ENCODE measurements at regions of chr12 and their contacts with region 1.

Region 1: DNA sequence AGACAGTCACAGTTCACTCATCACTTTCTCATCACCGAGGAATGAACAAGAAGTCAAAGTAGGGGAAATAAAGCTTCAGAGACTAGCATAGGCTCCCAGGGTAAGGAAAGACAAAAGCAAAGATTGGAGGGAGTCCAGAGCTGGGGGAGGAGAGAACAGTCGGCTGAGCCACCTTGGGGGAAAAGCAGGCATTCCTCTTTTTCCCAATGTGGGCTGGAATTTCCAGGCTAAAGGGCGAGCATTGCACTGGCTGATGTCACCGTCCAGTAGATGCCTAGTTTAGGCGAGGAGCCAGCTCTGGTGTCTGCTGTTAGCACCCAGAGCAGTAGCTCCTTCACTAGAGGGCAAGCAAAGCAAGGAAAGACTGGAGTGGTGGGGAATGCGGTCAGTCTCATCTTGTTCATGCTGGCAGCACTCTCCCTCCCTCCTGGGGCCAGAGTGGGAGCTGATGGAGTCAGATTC is 8.5 kb upstream of the KRT75 start:
- DNase-seq: peak; percentile 98
- H3K4me3 ChIP-seq: no peak overlapping the region
- H3K27ac ChIP-seq: peak overlapping the region; percentile 98
- H3K4me1 ChIP-seq: peaks cover 67% of the 10 kb centered on the region
- H3K27me3 ChIP-seq: no peaks in the 10 kb centered on the region
- CTCF ChIP-seq: peak; percentile 37 to 60

Region 2: GRCh38 chr12:52380271-52380694 is 62.3 kb before region 1 on chr12:
- CTCF ChIA-PET with region 1: interaction called, 3 read pairs
- dilution Hi-C with region 1: no loop called
- in situ Hi-C with region 1: loop called in 1 of 2 experiments (anchors 5 kb)
- intact Hi-C with region 1: no loop called
- DNase-seq: peak; percentile 58
- H3K4me3 ChIP-seq: no peak overlapping the region
- H3K27ac ChIP-seq: no peak overlapping the region
- H3K4me1 ChIP-seq: no peaks in the 10 kb centered on the region
- H3K27me3 ChIP-seq: no peaks in the 10 kb centered on the region
- CTCF ChIP-seq: peak; percentile 73 to 88

Region 3: DNA sequence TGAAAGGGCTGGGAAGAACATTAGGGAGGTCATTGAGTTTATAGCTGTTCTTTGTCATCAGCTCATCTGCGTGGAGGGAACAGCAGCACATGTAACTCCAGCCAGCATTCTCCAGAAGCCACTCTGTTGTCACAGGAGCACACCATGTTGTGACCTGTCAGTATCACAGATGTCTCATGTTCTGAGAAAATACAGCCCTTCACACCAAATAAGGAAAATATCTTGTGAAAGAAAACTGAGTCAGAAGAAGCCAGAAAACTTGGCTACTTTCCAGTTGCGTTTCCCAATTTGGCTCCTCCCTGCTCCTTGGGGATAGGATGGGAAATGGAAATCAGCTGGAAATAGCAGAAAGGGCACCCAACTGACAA is 26.3 kb before region 1 on chr12:
- CTCF ChIA-PET with region 1: no interaction called
- dilution Hi-C with region 1: no loop called
- in situ Hi-C with region 1: no loop called
- intact Hi-C with region 1: loop called (anchors 1 kb)
- DNase-seq: peak; percentile 96
- H3K4me3 ChIP-seq: no peak overlapping the region
- H3K27ac ChIP-seq: no peak overlapping the region
- H3K4me1 ChIP-seq: peaks cover 26% of the 10 kb centered on the region
- H3K27me3 ChIP-seq: no peaks in the 10 kb centered on the region
- CTCF ChIP-seq: no peak

Region 4: GRCh38 chr12:52495389-52495788 is 52.8 kb after region 1 on chr12:
- CTCF ChIA-PET with region 1: interaction called, 15 read pairs
- dilution Hi-C with region 1: loop called (anchors 5 kb)
- in situ Hi-C with region 1: no loop called
- intact Hi-C with region 1: loop called (anchors 1 kb)
- DNase-seq: peak; percentile 72
- H3K4me3 ChIP-seq: no peak overlapping the region
- H3K27ac ChIP-seq: peak overlapping the region; percentile 99
- H3K4me1 ChIP-seq: peaks cover 69% of the 10 kb centered on the region
- H3K27me3 ChIP-seq: no peaks in the 10 kb centered on the region
- CTCF ChIP-seq: peak in 1 of 2 donors; percentile 31

Region 5: GRCh38 chr12:52515927-52516831 is 73.5 kb after region 1 on chr12:
- CTCF ChIA-PET with region 1: interaction called, 4 read pairs
- dilution Hi-C with region 1: no loop called
- in situ Hi-C with region 1: loop called in 1 of 2 experiments (anchors 5 kb)
- intact Hi-C with region 1: loop called (anchors 1 kb)
- DNase-seq: peak; percentile 82
- H3K4me3 ChIP-seq: peak overlapping the region; percentile 66 to 94 (median 79)
- H3K27ac ChIP-seq: peak overlapping the region; percentile 82
- H3K4me1 ChIP-seq: peaks cover 30% of the 10 kb centered on the region
- H3K27me3 ChIP-seq: no peaks in the 10 kb centered on the region
- CTCF ChIP-seq: no peak

Region 6: GRCh38 chr12:52870351-52871290 is 428.0 kb after region 1 on chr12:
- CTCF ChIA-PET with region 1: no interaction called
- dilution Hi-C with region 1: no loop called
- in situ Hi-C with region 1: loop called in 1 of 2 experiments (anchors 5 kb)
- intact Hi-C with region 1: loop called (anchors 1 kb)
- DNase-seq: peak; percentile 52
- H3K4me3 ChIP-seq: no peak overlapping the region
- H3K27ac ChIP-seq: peak overlapping the region; percentile 67
- H3K4me1 ChIP-seq: peaks cover 59% of the 10 kb centered on the region
- H3K27me3 ChIP-seq: no peaks in the 10 kb centered on the region
- CTCF ChIP-seq: peak; percentile 57 to 74